ENCODE measurements at regions of chr2 and their contacts with region 1.

Region 1: GRCh38 chr2:240232961-240233893 is 92.8 kb upstream of the OTOS start:
- DNase-seq: peak; percentile 93
- ATAC-seq: peak; percentile 88

Region 2: GRCh38 chr2:240200230-240201051 is 32.8 kb before region 1 on chr2:
- intact Hi-C with region 1: no loop called
- DNase-seq: no peak
- ATAC-seq: no peak

Region 3: DNA sequence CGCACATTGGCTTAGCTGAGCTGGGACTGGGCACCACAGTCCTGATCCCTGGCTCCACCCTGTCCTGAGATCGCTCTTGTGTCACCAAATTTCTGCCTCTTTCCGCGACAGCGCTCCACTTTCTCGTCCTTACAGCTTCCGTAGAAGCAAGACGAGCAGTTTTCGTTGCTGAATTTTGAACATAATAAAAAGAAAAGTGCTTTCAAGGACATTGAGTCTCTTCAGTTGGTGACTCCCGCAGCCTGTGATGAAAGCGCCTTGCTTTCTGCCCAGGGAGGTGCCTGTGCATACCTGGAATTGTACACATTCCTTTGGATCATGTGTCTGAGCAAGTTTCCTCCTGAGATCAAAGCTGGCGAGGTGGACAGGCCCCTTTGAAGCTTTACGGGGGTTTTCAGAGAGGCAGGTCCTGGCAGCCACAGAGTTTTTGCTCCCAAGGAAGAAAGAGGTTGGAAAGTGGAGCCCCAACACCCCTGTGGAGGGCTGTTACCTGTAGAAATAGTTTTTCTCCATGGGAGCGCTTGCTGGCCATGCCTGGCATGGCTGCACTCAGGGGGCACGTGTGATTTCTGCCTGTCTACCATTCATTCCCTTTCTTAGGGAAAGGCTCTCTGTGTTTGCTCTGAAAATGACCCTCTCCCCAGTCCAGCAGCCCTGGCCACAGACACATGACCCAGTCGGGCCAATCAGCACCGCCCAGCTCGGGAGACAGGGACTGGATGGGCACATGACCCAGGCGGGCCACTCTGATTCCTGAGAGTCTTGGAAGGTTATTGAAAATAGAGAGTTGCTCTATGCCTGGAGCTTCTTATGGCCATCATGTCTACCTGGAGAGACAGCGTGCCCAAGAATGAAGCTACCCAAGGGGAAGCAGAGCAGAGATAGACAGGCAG is 22.8 kb after region 1 on chr2:
- intact Hi-C with region 1: no loop called
- DNase-seq: no peak
- ATAC-seq: no peak

Region 4: DNA sequence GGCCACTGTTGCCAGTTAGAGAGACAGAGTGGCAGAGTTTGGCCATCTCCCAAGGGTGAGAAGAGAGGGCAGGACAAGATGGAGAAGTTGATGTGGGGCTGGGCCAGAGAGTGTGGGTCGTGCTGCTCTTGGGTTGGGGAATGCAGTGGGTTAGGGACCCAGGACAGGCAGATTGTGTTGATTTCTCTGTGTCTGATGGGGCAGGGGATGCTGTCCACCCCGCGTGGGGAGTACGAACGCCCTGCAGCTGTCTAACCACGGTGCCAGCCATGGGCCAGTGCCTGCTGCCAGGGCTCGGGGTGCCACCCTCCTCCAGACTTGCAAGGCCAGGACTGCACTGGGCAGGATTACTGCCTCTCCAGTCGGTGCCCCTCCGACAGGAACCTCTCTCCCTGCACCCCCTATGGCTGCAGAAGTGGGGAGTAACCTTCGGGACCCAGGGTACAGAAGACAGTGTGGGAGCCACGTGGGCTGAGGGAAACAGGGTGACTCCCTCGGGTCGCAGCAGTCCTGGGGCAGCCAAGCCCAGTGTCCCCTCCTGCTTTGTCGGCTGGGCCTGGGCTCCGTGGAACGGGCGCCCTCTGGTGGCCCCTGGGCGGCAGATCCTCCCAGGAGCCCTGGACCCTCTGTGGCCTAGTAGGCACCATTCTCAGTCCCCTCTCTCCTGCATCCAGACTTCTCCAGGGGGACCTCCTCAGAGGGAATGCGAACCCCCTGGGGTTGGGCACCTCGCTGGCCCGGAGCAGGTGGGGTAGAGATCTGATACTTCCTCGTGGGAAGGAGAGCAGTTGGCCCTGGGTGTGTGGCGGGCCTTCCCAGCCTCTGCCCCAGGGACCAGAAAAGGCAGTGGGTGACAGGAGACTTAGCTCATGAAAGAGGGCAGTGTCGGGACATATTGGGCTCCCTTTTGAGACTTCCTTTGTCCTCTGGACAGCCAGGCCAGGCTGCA is 204.9 kb after region 1 on chr2:
- intact Hi-C with region 1: loop called (anchors 2 kb)
- DNase-seq: peak; percentile 83
- ATAC-seq: peak; percentile 71

Measured in sciatic nerve (tissue), 2 donors.